Dendritic cell treated with granulocyte-macrophage colony-stimulating factor and Interleukin-4, amounts not matched to agents 40 ng/mL and 50 ng/mL, for 4 days (primary cell): ENCODE measurements at regions of chr19 and their contacts with region 1.

Region 1: GRCh38 chr19:1549332-1549945 is 18.7 kb downstream of the MEX3D start:
- H3K4me3 Mint-ChIP-seq: no peak overlapping the region
- H3K27ac Mint-ChIP-seq: no peak overlapping the region
- H3K4me1 Mint-ChIP-seq: no peaks in the 10 kb centered on the region
- H3K27me3 Mint-ChIP-seq: peaks cover 38% of the 10 kb centered on the region

Region 2: DNA sequence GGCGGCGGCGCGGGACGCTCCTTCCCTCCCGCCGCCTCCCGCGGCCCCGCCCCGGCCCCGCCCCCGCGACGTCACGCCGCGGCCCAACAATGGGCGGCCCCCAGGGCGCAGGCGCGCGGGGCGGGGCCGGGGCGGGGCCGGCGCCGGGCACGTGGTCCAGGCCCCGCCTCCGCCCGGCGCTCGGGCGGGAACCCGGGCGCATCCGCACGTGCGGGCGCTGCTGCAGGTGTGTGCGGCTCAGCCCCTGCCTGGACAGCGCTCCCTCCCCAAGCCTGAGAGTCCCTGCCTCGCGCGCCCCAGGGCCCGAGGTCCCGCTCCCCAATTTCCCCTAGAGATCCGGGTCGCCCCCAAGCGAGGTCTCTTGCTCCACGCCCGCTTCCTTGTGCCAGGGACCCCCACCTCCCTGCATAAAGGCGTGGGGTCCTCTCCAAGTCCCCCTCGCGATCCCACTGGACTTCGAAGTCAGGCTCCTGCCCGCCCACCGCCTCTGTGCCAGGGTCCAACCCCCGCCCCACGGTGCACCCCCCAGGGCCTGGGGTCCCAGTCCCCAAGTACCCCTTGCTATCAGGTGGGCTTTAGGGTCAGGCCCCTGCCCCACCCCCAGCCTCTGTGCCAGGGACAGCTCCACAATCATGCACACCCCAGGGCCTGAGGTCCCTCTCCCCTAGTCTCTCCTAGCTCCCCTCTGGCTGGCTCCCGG is 19.0 kb after region 1 on chr19 and contains the start of gene MEX3D:
- intact Hi-C with region 1: no loop called
- H3K4me3 Mint-ChIP-seq: peak within 1 kb of the TSS; percentile 65
- H3K27ac Mint-ChIP-seq: peak within 1 kb of the TSS; percentile 44
- H3K4me1 Mint-ChIP-seq: peaks cover 15% of the 10 kb centered on the region
- H3K27me3 Mint-ChIP-seq: peaks cover 53% of the 10 kb centered on the region

Region 3: DNA sequence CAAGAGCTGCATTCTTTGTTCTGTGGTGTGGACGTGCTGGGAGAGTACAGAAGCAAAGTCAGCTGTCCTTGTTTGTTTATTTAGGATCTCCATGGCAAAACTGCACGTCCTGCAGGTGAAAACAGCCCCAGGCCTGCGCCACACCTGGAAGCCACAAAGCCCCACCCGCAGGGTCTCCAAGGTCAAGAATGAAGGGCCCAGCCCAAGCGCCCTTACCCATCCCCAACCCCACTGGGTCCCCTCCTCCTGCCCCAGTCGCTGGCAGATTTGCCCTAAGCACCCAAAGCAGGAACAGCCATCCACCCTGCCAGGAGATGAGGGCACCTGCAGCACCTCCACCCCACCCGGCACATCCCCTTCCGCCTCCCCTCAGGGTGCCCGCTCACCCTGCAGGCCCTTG is 32.8 kb after region 1 on chr19:
- intact Hi-C with region 1: no loop called
- H3K4me3 Mint-ChIP-seq: no peak overlapping the region
- H3K27ac Mint-ChIP-seq: no peak overlapping the region
- H3K4me1 Mint-ChIP-seq: no peaks in the 10 kb centered on the region
- H3K27me3 Mint-ChIP-seq: no peaks in the 10 kb centered on the region

Region 4: GRCh38 chr19:1767464-1767933 is 218.1 kb after region 1 on chr19:
- intact Hi-C with region 1: loop called (anchors 5 kb)
- H3K4me3 Mint-ChIP-seq: no peak overlapping the region
- H3K27ac Mint-ChIP-seq: no peak overlapping the region
- H3K4me1 Mint-ChIP-seq: peaks cover 13% of the 10 kb centered on the region
- H3K27me3 Mint-ChIP-seq: peaks cover 98% of the 10 kb centered on the region